ENCODE measurements at regions of chr9 and their contacts with region 1.

Region 1: GRCh38 chr9:93159601-93160471 is 24.1 kb upstream of the WNK2 start:
- DNase-seq: peak; percentile 62
- H3K4me3 ChIP-seq: no peak overlapping the region
- H3K27ac ChIP-seq: no peak overlapping the region
- H3K4me1 ChIP-seq: no peaks in the 10 kb centered on the region
- H3K27me3 ChIP-seq: no peaks in the 10 kb centered on the region
- CTCF ChIP-seq: peak; percentile 87 to 99

Region 2: GRCh38 chr9:92954049-92954861 is 205.6 kb before region 1 on chr9:
- CTCF ChIA-PET with region 1: no interaction called
- dilution Hi-C with region 1: no loop called
- in situ Hi-C with region 1: no loop called
- intact Hi-C with region 1: loop called (anchors 2 kb)
- DNase-seq: peak; percentile 89
- H3K4me3 ChIP-seq: no peak overlapping the region
- H3K27ac ChIP-seq: peak overlapping the region; percentile 38
- H3K4me1 ChIP-seq: peaks cover 20% of the 10 kb centered on the region
- H3K27me3 ChIP-seq: no peaks in the 10 kb centered on the region
- CTCF ChIP-seq: no peak

Region 3: DNA sequence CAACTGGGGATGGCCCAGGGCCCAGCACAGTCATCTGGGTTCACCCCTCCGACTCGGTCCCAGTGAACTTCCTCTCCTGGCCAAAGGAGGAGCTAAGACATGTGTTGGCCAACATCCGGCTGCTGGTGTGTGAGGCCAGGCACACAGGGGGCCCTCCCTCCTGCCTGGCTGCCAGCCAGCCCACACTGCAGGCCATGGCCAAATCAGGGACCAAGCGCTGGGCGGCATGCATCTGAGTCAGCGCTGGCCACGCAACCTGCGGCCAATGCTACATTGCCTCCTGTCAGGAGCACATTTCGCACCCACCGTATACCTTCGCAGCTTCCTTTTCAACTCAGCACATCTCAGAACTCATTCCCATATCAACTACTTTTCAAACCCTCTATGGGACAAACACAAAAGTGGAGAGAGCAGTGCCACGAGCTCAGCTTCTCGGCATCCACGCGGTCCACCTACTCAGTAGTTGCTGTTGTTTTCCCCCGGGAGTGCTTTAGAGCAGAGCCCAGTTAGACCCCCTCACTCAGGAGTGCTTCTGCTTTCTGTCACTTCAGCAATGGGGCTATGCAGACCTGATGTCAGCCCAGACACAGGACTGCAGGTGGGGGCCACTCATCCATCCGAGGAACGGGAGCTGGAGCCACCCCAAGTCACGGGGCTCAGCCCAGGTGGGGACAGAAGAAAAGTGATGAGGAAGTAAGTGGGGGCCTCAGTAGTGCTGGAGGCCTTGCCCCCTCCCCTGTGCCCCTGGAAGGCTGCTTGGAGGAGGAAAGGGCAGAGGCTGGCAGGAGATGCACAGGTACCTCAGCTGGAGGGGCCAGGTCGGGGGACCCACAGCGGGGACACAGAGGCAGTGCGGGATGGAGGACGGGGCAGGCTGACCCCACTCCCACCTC is 39.6 kb before region 1 on chr9:
- CTCF ChIA-PET with region 1: interaction called, 3 read pairs
- dilution Hi-C with region 1: loop called (anchors 5 kb)
- in situ Hi-C with region 1: no loop called
- intact Hi-C with region 1: no loop called
- DNase-seq: peak; percentile 92
- H3K4me3 ChIP-seq: no peak overlapping the region
- H3K27ac ChIP-seq: peak overlapping the region; percentile 17
- H3K4me1 ChIP-seq: peaks cover 15% of the 10 kb centered on the region
- H3K27me3 ChIP-seq: no peaks in the 10 kb centered on the region
- CTCF ChIP-seq: peak; percentile 13 to 57

Region 4: DNA sequence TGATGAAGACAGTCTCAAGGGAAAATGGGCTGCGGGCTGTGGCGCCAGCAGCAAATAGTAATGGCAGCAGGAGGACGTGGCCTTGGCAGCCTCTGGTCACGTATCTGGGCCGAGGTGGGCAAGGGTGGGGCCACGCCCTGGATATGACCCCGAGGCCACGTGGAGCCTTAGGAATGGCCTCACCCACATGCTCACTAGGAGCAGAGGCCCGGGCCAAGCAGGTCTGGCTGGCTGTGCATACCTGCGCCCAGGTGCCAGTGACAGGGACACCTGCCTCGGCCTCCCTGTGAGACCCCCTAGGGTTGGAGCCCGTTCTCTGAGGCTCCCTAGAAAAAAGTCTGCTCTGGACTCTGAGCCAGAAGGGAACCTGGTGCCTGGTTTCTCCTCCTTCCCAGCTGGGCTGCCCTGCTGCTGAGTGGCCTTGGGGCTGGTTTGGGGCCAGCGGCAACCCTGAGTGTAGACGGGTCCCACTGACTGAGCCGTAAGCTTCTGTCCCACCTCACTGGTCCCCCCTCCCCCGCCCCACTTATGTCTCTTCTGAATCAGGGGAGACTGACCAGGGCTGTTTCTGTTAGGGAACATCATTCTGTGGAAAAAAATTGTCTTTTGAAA is 84.8 kb after region 1 on chr9:
- CTCF ChIA-PET with region 1: no interaction called
- dilution Hi-C with region 1: loop called (anchors 5 kb)
- in situ Hi-C with region 1: no loop called
- intact Hi-C with region 1: no loop called
- DNase-seq: no peak
- H3K4me3 ChIP-seq: no peak overlapping the region
- H3K27ac ChIP-seq: no peak overlapping the region
- H3K4me1 ChIP-seq: no peaks in the 10 kb centered on the region
- H3K27me3 ChIP-seq: no peaks in the 10 kb centered on the region
- CTCF ChIP-seq: no peak

Region 5: DNA sequence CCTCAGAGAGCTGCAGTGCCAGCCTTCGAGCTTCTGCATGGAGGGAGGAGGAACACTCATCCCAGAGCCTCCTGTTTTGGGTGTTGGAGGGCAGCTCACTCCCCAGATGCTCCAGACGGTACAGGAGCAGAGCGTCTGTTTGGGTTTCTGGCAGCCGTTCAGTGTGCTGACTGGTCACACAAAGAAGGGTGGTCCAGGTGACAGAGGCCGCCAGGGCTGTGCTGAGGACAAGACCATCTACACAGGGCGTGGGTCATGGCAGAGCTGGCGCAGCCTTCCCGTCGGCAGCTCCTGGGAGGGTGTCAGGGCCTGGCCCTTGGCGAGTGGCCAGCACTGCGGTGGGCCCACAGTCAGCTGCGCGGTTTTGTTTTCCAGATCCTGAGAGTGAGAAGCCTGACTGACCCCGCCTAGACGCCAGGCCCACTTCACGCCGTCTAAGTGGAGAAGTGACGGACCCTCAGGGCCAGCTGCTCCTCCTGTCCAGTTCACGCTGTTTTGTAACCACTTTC is 160.2 kb after region 1 on chr9:
- CTCF ChIA-PET with region 1: no interaction called
- dilution Hi-C with region 1: loop called (anchors 5 kb)
- in situ Hi-C with region 1: no loop called
- intact Hi-C with region 1: no loop called
- DNase-seq: no peak
- H3K4me3 ChIP-seq: no peak overlapping the region
- H3K27ac ChIP-seq: no peak overlapping the region
- H3K4me1 ChIP-seq: no peaks in the 10 kb centered on the region
- H3K27me3 ChIP-seq: peaks cover 8% of the 10 kb centered on the region
- CTCF ChIP-seq: no peak

Region 6: GRCh38 chr9:93592643-93593021 is 432.8 kb after region 1 on chr9:
- CTCF ChIA-PET with region 1: no interaction called
- dilution Hi-C with region 1: loop called (anchors 10 kb)
- in situ Hi-C with region 1: no loop called
- intact Hi-C with region 1: no loop called
- DNase-seq: no peak
- H3K4me3 ChIP-seq: no peak overlapping the region
- H3K27ac ChIP-seq: no peak overlapping the region
- H3K4me1 ChIP-seq: peaks cover 9% of the 10 kb centered on the region
- H3K27me3 ChIP-seq: no peaks in the 10 kb centered on the region
- CTCF ChIP-seq: peak in 1 of 2 donors; percentile 35

Measured in mammary epithelial cell (primary cell).